Heart right ventricle (tissue), 16 donors: ENCODE measurements at regions of chr18 and their contacts with region 1.

Region 1: GRCh38 chr18:3379685-3380084 is 70.3 kb upstream of the TGIF1 start:
- DNase-seq: no peak
- ATAC-seq: no peak
- H3K4me3 ChIP-seq: no peak overlapping the region
- H3K27ac ChIP-seq: no peak overlapping the region
- H3K4me1 ChIP-seq: no peaks in the 10 kb centered on the region
- H3K27me3 ChIP-seq: peaks cover 0 to 4% (median 0%) of the 10 kb centered on the region in 7 donors
- CTCF ChIP-seq: no peak

Region 2: DNA sequence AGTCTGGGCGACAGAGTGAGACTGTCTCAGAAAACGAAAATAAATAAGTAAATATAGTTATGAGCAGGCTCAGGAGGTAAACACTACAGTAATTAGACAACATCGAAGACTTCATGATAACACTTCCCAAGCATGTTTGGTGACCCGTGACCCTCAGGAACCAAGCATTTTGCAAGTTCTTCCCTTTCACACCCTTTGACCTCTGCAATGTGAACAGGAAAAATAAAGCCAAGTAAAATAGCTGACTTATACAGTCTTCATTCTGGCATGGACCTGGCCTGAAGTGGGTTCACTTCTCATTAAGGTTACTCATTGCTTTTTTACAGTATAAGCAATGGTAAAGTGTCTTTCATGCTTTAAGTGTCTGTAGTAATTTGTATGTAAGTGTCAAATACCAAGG is 55.0 kb after region 1 on chr18:
- intact Hi-C with region 1: loop called in 1 of 10 experiments (anchors 10 kb)
- DNase-seq: no peak
- ATAC-seq: no peak
- H3K4me3 ChIP-seq: no peak overlapping the region
- H3K27ac ChIP-seq: no peak overlapping the region
- H3K4me1 ChIP-seq: no peaks in the 10 kb centered on the region
- H3K27me3 ChIP-seq: no peaks in the 10 kb centered on the region
- CTCF ChIP-seq: no peak